ENCODE measurements at regions of chr3 and their contacts with region 1.

Region 1: DNA sequence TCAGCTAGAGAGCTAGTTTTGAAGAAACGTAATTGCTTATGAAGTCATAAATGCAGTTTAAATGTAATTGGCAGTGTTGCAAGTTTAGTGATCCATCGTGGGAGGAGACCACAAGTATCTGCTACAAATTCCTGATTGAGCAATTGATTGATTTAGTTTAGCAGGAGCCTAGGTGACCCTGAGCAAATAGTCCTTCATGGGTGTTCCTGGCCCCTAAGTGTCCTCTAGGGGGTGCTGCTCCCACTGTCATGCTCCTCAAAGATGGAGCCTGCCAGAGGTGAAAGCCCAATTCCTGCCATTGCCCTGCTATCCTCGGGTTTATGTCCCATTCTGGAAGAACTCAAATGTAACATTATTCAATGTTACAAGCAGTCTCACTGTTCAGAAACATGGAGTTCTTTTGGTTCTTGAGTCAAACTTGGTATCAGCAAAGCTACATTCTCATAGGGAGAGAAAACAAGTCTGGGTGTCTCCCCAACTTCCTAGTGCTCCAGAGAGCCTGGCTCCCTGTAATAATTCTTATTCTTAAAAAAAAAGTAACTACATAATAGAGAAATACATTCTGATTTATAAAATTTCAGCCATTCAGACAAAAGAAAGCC is 29.8 kb upstream of the SENP5 start:
- DNase-seq: peak; percentile 79
- H3K4me3 ChIP-seq: no peak overlapping the region
- H3K27ac ChIP-seq: no peak overlapping the region
- H3K4me1 ChIP-seq: no peaks in the 10 kb centered on the region
- H3K27me3 ChIP-seq: no peaks in the 10 kb centered on the region
- CTCF ChIP-seq: peak; percentile 81

Region 2: GRCh38 chr3:196749125-196749524 is 88.8 kb before region 1 on chr3:
- intact Hi-C with region 1: no loop called
- DNase-seq: no peak
- H3K4me3 ChIP-seq: no peak overlapping the region
- H3K27ac ChIP-seq: no peak overlapping the region
- H3K4me1 ChIP-seq: peaks cover under 1% of the 10 kb centered on the region
- H3K27me3 ChIP-seq: no peaks in the 10 kb centered on the region
- CTCF ChIP-seq: no peak

Region 3: GRCh38 chr3:196942226-196942914 is 104.5 kb after region 1 on chr3 and contains the start of gene NCBP2:
- intact Hi-C with region 1: no loop called
- DNase-seq: peak; percentile 99
- H3K4me3 ChIP-seq: peak within 1 kb of the TSS; percentile 98
- H3K27ac ChIP-seq: peak within 1 kb of the TSS; percentile 97
- H3K4me1 ChIP-seq: peaks cover 8% of the 10 kb centered on the region
- H3K27me3 ChIP-seq: no peaks in the 10 kb centered on the region
- CTCF ChIP-seq: peak; percentile 48
- total RNA-seq, gene NCBP2: 61.8 to 92.8 TPM

Region 4: GRCh38 chr3:196969660-196970546 is 132.0 kb after region 1 on chr3:
- intact Hi-C with region 1: loop called (anchors 2 kb)
- DNase-seq: peak; percentile 68
- H3K4me3 ChIP-seq: peak overlapping the region; percentile 78
- H3K27ac ChIP-seq: peak overlapping the region; percentile 82
- H3K4me1 ChIP-seq: peaks cover 9% of the 10 kb centered on the region
- H3K27me3 ChIP-seq: no peaks in the 10 kb centered on the region
- CTCF ChIP-seq: peak; percentile 78

Measured in colonic mucosa (tissue), 4 donors.